Caco-2 (cell line): ENCODE measurements at regions of chr9 and their contacts with region 1.

Region 1: GRCh38 chr9:86282077-86282978 is at the start of gene ISCA1:
- DNase-seq: peak; percentile 92 to 94
- H3K4me3 ChIP-seq: peak within 1 kb of the TSS; percentile 84
- H3K4me3 Mint-ChIP-seq: peak within 1 kb of the TSS; percentile 76
- H3K27ac Mint-ChIP-seq: peak within 1 kb of the TSS; percentile 91
- H3K4me1 ChIP-seq: peaks cover 3% of the 10 kb centered on the region; the same call in 1 of the 2 replicates
- H3K4me1 Mint-ChIP-seq: peaks cover 10% of the 10 kb centered on the region
- H3K27me3 ChIP-seq: no peaks in the 10 kb centered on the region
- H3K27me3 Mint-ChIP-seq: no peaks in the 10 kb centered on the region
- CTCF ChIP-seq: no peak
- total RNA-seq, gene ISCA1: 11.2 and 12.8 TPM in 2 replicates

Region 2: DNA sequence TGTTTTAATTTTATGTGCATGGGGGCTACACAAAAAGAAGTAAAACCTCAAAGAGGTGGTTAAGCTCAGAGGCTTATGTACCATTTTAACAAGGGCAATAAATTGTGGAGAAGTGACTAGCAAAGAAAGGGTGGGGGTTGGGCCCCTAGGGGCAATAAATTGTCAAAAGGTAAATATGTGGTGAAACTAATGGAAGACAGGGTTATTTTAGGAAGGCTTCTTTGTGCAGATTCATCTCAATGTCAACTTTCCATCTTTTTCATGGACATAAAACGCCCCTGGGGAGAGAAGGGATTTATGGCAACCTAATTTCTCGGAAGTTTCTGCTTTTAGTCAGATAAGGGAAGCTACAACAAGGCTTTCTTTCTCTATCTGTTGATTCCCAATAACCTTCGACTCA is 140.5 kb before region 1 on chr9:
- CTCF ChIA-PET with region 1: no interaction called
- POLR2A ChIA-PET with region 1: no interaction called
- intact Hi-C with region 1: loop called (anchors 5 kb)
- DNase-seq: peak; percentile 47 to 48
- H3K4me3 ChIP-seq: no peak overlapping the region
- H3K4me3 Mint-ChIP-seq: no peak overlapping the region
- H3K27ac Mint-ChIP-seq: no peak overlapping the region
- H3K4me1 ChIP-seq: no peaks in the 10 kb centered on the region
- H3K4me1 Mint-ChIP-seq: peaks cover 14% of the 10 kb centered on the region
- H3K27me3 ChIP-seq: no peaks in the 10 kb centered on the region
- H3K27me3 Mint-ChIP-seq: no peaks in the 10 kb centered on the region
- CTCF ChIP-seq: no peak

Region 3: GRCh38 chr9:86217076-86217755 is 65.1 kb before region 1 on chr9:
- CTCF ChIA-PET with region 1: no interaction called
- POLR2A ChIA-PET with region 1: no interaction called
- intact Hi-C with region 1: no loop called
- DNase-seq: no peak
- H3K4me3 ChIP-seq: no peak overlapping the region
- H3K4me3 Mint-ChIP-seq: no peak overlapping the region
- H3K27ac Mint-ChIP-seq: no peak overlapping the region
- H3K4me1 ChIP-seq: no peaks in the 10 kb centered on the region
- H3K4me1 Mint-ChIP-seq: no peaks in the 10 kb centered on the region
- H3K27me3 ChIP-seq: no peaks in the 10 kb centered on the region
- H3K27me3 Mint-ChIP-seq: no peaks in the 10 kb centered on the region
- CTCF ChIP-seq: no peak

Region 4: DNA sequence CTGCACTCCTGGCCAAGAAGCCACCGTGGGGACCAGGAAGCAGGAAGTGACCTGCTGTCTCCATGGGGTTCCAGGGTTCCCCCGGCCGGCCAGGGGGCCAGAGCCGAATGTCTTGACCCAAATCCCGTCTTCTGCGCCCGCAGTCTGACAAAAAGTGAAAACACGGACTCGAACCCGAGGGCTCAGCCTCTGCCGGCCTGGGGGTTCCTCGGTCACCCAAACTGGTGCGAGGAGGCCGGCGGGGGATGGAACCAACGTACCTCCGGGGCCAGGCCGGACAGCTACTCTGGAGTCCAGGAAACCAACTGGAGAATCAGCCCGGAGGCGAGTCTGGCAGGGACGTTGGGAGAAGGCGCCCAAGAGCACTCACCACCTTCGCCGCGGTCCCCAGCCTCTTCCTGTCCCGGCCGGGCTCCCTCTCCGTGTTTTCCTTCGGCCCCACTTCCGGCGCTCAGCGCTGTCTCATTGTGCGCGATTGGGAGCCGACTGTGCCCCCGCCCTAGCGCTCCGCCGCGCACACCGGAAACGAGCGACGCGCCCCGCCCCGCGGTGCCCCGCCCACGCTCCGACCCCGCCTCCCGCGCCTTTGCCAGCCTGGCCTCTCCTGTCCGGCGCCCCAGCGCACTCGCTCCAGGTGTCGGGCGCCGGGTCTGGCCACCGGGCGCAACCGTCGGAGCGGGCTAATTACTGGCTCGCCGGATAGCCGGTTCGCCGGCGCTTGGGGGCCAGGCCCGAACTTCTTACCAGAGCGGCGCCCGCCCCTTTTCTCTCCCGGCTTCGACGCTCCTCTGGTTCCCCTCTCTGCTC is 71.9 kb after region 1 on chr9 and contains the start of gene TUT7:
- CTCF ChIA-PET with region 1: no interaction called
- POLR2A ChIA-PET with region 1: no interaction called
- intact Hi-C with region 1: loop called (anchors 1 kb)
- DNase-seq: peak; percentile 92 to 93
- H3K4me3 ChIP-seq: peak within 1 kb of the TSS; percentile 75
- H3K4me3 Mint-ChIP-seq: peak within 1 kb of the TSS; percentile 97
- H3K27ac Mint-ChIP-seq: peak within 1 kb of the TSS; percentile 91
- H3K4me1 ChIP-seq: peaks cover 6% of the 10 kb centered on the region; the same call in 1 of the 2 replicates
- H3K4me1 Mint-ChIP-seq: no peaks in the 10 kb centered on the region
- H3K27me3 ChIP-seq: no peaks in the 10 kb centered on the region
- H3K27me3 Mint-ChIP-seq: no peaks in the 10 kb centered on the region
- CTCF ChIP-seq: no peak
- total RNA-seq, gene TUT7: 14.1 and 17.2 TPM in 2 replicates

Region 5: DNA sequence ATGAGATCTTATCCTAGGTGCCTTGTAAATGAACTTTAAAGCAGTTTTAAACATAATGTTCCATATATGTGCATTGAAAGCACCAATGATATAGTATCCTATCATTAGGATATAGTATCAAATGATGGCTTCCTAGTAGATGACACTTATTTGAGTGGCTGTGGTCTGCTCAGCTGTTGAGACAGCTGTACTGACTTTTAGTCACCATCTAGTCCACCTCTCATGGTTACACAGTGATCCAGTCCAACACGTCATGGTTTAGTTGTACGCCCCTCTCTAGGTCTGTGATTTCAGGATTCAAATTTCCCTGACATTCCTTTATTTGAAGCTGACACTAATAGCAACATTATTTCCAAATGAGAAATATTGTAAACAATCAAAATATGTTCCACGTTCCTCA is 199.1 kb after region 1 on chr9:
- CTCF ChIA-PET with region 1: no interaction called
- POLR2A ChIA-PET with region 1: no interaction called
- intact Hi-C with region 1: no loop called
- DNase-seq: no peak
- H3K4me3 ChIP-seq: no peak overlapping the region
- H3K4me3 Mint-ChIP-seq: no peak overlapping the region
- H3K27ac Mint-ChIP-seq: no peak overlapping the region
- H3K4me1 ChIP-seq: no peaks in the 10 kb centered on the region
- H3K4me1 Mint-ChIP-seq: no peaks in the 10 kb centered on the region
- H3K27me3 ChIP-seq: no peaks in the 10 kb centered on the region
- H3K27me3 Mint-ChIP-seq: peaks cover 2% of the 10 kb centered on the region
- CTCF ChIP-seq: no peak